CD8-positive, alpha-beta T cell (primary cell): ENCODE measurements at regions of chr12 and their contacts with region 1.

Region 1: GRCh38 chr12:49740930-49741881 is at the start of gene TMBIM6:
- DNase-seq: peak; percentile 96 to 100 (median 98)
- ATAC-seq: peak; percentile 86
- H3K4me3 ChIP-seq: peak within 1 kb of the TSS; percentile 63 to 88
- H3K4me3 Mint-ChIP-seq: peak within 1 kb of the TSS; percentile 93
- H3K27ac ChIP-seq: peak within 1 kb of the TSS; percentile 96 to 99
- H3K27ac Mint-ChIP-seq: peak within 1 kb of the TSS; percentile 98
- H3K4me1 ChIP-seq: peaks cover 38% of the 10 kb centered on the region
- H3K4me1 Mint-ChIP-seq: peaks cover 41% of the 10 kb centered on the region
- H3K27me3 ChIP-seq: no peaks in the 10 kb centered on the region
- H3K27me3 Mint-ChIP-seq: no peaks in the 10 kb centered on the region
- CTCF ChIP-seq: peak; percentile 93
- total RNA-seq, gene TMBIM6: 289 to 309 TPM

Region 2: DNA sequence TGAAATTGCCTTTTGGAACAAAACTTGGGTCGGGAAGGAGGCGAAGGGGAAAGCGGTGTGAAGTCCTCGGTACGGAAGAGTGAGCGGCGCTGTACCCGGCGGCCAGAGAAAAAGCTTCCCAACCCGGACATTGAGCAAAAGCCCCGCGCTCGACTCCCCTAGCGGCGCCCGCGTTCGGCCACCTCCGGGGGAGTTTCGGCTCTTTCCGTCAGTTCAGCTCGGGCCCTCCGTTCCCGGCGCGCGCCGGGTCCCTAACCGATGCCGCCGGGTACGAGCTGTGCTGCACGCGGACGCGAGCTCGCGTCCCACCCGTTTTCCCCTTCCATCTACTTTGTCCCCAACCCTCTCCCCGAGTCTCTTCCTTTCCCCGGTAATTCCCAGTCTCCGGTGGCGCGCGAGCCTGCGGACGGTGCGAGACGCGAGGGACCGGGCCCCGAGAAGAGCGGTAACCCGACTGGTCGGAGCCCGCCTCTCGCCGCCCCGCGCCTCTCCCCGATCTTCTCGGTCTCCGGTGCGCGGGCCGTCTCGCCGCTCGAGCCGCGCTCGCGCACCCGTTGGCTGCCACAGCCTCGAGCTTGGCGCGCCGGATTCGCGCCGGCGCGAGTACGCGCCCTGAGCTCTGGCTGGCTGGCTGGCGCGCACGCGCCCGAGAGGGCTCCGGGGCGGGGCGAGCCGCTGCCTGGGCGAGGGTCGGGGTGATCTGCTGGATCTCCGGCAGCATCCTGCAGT is 374.4 kb before region 1 on chr12:
- CTCF ChIA-PET with region 1: no interaction called
- POLR2A ChIA-PET with region 1: interaction called, 5 read pairs
- intact Hi-C with region 1: loop called in 1 of 2 experiments (anchors 2 kb)
- DNase-seq: peak; percentile 74 to 91 (median 84)
- ATAC-seq: peak; percentile 83
- H3K4me3 ChIP-seq: peak overlapping the region; percentile 91 to 100
- H3K4me3 Mint-ChIP-seq: peak overlapping the region; percentile 96
- H3K27ac ChIP-seq: peak overlapping the region; percentile 79 to 85
- H3K27ac Mint-ChIP-seq: peak overlapping the region; percentile 91
- H3K4me1 ChIP-seq: peaks cover 16% of the 10 kb centered on the region
- H3K4me1 Mint-ChIP-seq: peaks cover 31% of the 10 kb centered on the region
- H3K27me3 ChIP-seq: no peaks in the 10 kb centered on the region
- H3K27me3 Mint-ChIP-seq: no peaks in the 10 kb centered on the region
- CTCF ChIP-seq: no peak

Region 3: DNA sequence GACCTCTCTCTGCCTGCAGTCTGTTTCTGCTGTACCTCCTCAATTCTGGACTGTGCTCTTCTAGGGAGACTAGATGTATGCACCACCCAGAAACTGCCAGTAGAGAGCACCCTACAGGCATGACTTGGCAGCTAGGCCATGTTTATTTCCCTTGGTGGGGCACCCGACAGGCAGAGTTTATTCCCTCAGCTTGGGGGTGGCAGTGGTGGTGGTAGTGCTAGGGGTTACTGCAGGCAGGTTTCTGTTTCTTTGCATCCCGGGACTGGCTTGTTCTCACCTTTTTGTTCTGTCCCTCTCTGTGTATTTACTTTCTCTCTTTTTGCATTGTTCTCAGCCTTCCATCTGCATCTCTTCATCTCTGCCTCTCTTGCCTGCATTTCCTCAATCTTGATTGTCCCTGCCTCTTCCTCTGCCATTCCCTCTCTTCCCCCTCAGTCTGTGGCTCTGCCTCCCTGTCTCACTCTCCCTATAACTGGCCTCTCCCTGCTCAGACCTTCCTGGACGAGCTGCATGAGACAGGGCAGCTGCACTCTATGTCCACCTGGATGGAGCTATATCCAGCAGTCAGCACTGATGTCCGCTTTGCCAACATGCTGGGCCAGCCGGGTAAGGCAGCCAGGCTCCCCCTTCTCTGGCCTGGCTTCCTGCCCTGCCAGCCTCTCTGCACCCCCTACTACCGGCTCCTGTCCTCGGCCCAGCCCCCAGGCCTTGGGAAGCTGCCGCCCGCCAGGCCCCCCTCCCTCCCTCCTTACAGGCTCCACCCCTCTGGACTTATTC is 104.0 kb before region 1 on chr12:
- CTCF ChIA-PET with region 1: interaction called, 15 read pairs
- POLR2A ChIA-PET with region 1: interaction called, 8 read pairs
- intact Hi-C with region 1: no loop called
- DNase-seq: peak in 8 of 9 experiments; percentile 39 to 76 (median 62)
- ATAC-seq: peak; percentile 99
- H3K4me3 ChIP-seq: no peak overlapping the region
- H3K4me3 Mint-ChIP-seq: no peak overlapping the region
- H3K27ac ChIP-seq: no peak overlapping the region
- H3K27ac Mint-ChIP-seq: peak overlapping the region; percentile 46
- H3K4me1 ChIP-seq: peaks cover 21% of the 10 kb centered on the region
- H3K4me1 Mint-ChIP-seq: peaks cover 29% of the 10 kb centered on the region
- H3K27me3 ChIP-seq: no peaks in the 10 kb centered on the region
- H3K27me3 Mint-ChIP-seq: no peaks in the 10 kb centered on the region
- CTCF ChIP-seq: peak; percentile 65

Region 4: GRCh38 chr12:49828133-49829091 is 87.2 kb after region 1 on chr12 and contains the start of gene NCKAP5L:
- CTCF ChIA-PET with region 1: interaction called, 8 read pairs
- POLR2A ChIA-PET with region 1: interaction called, 16 read pairs
- intact Hi-C with region 1: loop called (anchors 1 kb)
- DNase-seq: peak; percentile 86 to 96 (median 94)
- ATAC-seq: peak; percentile 97
- H3K4me3 ChIP-seq: peak within 1 kb of the TSS; percentile 68 to 91
- H3K4me3 Mint-ChIP-seq: peak within 1 kb of the TSS; percentile 97
- H3K27ac ChIP-seq: peak within 1 kb of the TSS; percentile 65 to 69
- H3K27ac Mint-ChIP-seq: peak within 1 kb of the TSS; percentile 97
- H3K4me1 ChIP-seq: peaks cover 15% of the 10 kb centered on the region
- H3K4me1 Mint-ChIP-seq: peaks cover 39% of the 10 kb centered on the region
- H3K27me3 ChIP-seq: no peaks in the 10 kb centered on the region
- H3K27me3 Mint-ChIP-seq: no peaks in the 10 kb centered on the region
- CTCF ChIP-seq: no peak
- total RNA-seq, gene NCKAP5L: 10.6 to 10.7 TPM

Region 5: GRCh38 chr12:50167041-50167828 is 426.0 kb after region 1 on chr12 and contains the start of gene CERS5:
- CTCF ChIA-PET with region 1: no interaction called
- POLR2A ChIA-PET with region 1: no interaction called
- intact Hi-C with region 1: loop called in 1 of 2 experiments (anchors 5 kb)
- DNase-seq: peak; percentile 92 to 98 (median 96)
- ATAC-seq: peak; percentile 95
- H3K4me3 ChIP-seq: peak within 1 kb of the TSS; percentile 85 to 90
- H3K4me3 Mint-ChIP-seq: peak within 1 kb of the TSS; percentile 92
- H3K27ac ChIP-seq: peak within 1 kb of the TSS; percentile 88 to 93
- H3K27ac Mint-ChIP-seq: peak within 1 kb of the TSS; percentile 95
- H3K4me1 ChIP-seq: peaks cover 15% of the 10 kb centered on the region
- H3K4me1 Mint-ChIP-seq: peaks cover 29% of the 10 kb centered on the region
- H3K27me3 ChIP-seq: no peaks in the 10 kb centered on the region
- H3K27me3 Mint-ChIP-seq: no peaks in the 10 kb centered on the region
- CTCF ChIP-seq: no peak
- total RNA-seq, gene CERS5: 45.2 to 46.2 TPM